ENCODE measurements at regions of chr19 and their contacts with region 1.

Region 1: GRCh38 chr19:13430790-13431582 is 75.3 kb downstream of the CACNA1A start:
- DNase-seq: peak in 1 of 2 experiments; percentile 85
- H3K4me3 ChIP-seq: no peak overlapping the region
- H3K27ac ChIP-seq: no peak overlapping the region
- H3K4me1 ChIP-seq: no peaks in the 10 kb centered on the region
- H3K27me3 ChIP-seq: no peaks in the 10 kb centered on the region
- CTCF ChIP-seq: peak; percentile 84 to 92 (median 86)
- EP300 ChIP-seq: no peak
- POLR2A ChIP-seq: no peak
- RAD21 ChIP-seq: peak; percentile 71 to 82

Region 2: GRCh38 chr19:13417054-13417453 is 13.9 kb before region 1 on chr19:
- CTCF ChIA-PET with region 1: interaction called, 19 read pairs
- POLR2A ChIA-PET with region 1: interaction called, 3 read pairs
- DNase-seq: no peak
- H3K4me3 ChIP-seq: no peak overlapping the region
- H3K27ac ChIP-seq: no peak overlapping the region
- H3K4me1 ChIP-seq: no peaks in the 10 kb centered on the region
- H3K27me3 ChIP-seq: no peaks in the 10 kb centered on the region
- CTCF ChIP-seq: no peak
- EP300 ChIP-seq: no peak
- POLR2A ChIP-seq: no peak
- RAD21 ChIP-seq: no peak

Region 3: GRCh38 chr19:13487985-13488384 is 57.0 kb after region 1 on chr19:
- CTCF ChIA-PET with region 1: no interaction called
- POLR2A ChIA-PET with region 1: no interaction called
- DNase-seq: no peak
- H3K4me3 ChIP-seq: no peak overlapping the region
- H3K27ac ChIP-seq: no peak overlapping the region
- H3K4me1 ChIP-seq: peaks cover 0 to 9% (median 0%) of the 10 kb centered on the region in 4 experiments; a peak in 1 of 7 replicates
- H3K27me3 ChIP-seq: no peaks in the 10 kb centered on the region
- CTCF ChIP-seq: no peak
- EP300 ChIP-seq: no peak
- POLR2A ChIP-seq: no peak
- RAD21 ChIP-seq: no peak

Measured in H1 (cell line).